Esophagus muscularis mucosa (tissue), 4 donors: ENCODE measurements at regions of chr7 and their contacts with region 1.

Region 1: DNA sequence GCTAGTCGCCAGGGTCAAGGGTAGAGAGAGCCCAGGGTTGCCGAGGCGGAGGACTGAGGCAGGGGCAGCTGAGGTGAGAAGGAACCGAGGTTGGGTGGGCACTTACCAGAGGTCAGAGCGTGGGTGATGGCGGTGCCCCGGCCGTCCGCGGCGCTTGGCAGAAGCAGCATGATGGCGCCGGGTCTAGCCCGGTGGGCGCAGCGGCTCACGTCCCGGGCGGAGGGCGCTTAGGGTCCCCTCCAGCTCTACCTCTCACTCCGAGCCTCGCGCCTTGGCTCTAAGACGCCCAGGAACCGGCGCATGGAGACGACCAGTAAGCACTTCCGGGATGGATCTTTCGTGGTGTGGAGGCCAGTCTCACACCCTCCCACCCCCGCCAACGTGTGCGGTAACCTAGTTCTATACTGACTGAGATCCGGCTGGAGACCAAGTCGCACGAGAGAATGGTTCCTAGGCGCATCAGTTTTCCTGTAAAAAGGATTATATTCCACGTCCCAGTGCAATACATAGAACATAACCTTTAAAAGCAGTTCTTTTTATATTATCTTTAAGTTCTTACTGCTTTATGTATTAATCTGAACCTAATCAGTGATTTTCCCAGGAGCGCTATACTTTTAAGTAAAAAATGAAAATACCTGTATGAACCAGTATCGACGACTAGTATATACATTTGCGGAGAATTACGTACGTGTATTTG is at the start of gene DNAJC2:
- DNase-seq: peak; percentile 95
- H3K4me3 ChIP-seq: peak within 1 kb of the TSS; percentile 83 to 99 (median 92)
- H3K27ac ChIP-seq: peak within 1 kb of the TSS; percentile 82 to 88 (median 84)
- H3K4me1 ChIP-seq: peaks cover 38 to 61% (median 51%) of the 10 kb centered on the region in 4 donors
- H3K27me3 ChIP-seq: no peaks in the 10 kb centered on the region
- CTCF ChIP-seq: peak in 1 of 3 experiments; percentile 18
- EP300 ChIP-seq: no peak
- POLR2A ChIP-seq: no peak
- total RNA-seq, gene DNAJC2: 10.1 to 15.9 (median 10.3) TPM

Region 2: GRCh38 chr7:103148994-103149807 is 195.4 kb before region 1 on chr7 and contains the start of gene NAPEPLD:
- intact Hi-C with region 1: loop called (anchors 10 kb)
- DNase-seq: peak; percentile 94
- H3K4me3 ChIP-seq: peak within 1 kb of the TSS; percentile 68 to 85 (median 82)
- H3K27ac ChIP-seq: peak within 1 kb of the TSS; percentile 92 to 96 (median 95)
- H3K4me1 ChIP-seq: peaks cover 13 to 31% (median 26%) of the 10 kb centered on the region in 4 donors
- H3K27me3 ChIP-seq: no peaks in the 10 kb centered on the region
- CTCF ChIP-seq: no peak
- EP300 ChIP-seq: no peak
- POLR2A ChIP-seq: no peak
- total RNA-seq, gene NAPEPLD: 4.7 to 8.7 (median 6.1) TPM

Region 3: DNA sequence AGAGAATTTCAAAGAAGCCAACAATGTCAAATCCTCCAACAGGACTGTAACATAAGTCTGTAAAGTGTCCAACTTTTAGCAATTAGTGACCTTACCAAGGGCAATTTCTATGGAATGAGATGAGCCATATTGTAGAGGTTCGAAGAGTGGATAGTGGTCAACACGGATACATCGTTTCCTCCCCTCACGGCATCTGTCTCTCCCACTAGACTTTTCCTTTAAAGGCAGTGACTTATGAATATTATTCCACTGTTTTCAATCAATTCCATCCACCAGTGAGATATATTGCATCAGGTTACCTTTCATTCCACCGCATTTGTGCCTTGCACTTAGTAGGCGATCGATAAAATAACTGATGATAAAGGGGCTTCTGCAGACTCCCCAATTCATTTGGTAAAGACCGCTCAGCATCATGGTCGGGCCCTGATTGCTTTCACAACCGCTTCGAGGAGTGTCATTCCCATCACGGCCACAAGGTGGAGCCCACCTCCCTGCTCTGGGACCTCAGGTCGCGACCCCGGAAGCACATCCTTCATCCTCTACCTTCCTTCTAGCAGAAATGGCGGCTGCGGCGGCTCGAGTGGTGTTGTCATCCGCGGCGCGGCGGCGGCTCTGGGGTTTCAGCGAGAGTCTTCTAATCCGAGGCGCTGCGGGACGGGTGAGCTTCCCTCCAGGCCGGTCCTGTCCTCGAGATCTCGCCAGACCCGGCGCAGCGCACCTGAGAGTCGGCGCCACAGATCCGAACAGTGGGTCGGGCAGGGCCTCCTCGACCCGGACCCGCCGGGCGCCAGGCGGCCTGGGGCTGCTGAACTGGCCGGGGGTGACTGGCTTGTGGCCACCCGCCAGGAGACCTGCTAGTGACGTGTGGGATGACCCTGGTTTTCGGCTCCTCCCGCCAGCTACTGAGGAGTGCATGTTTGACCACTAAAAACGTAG is 47.4 kb before region 1 on chr7 and contains the start of gene PMPCB:
- intact Hi-C with region 1: loop called (anchors 5 kb)
- DNase-seq: peak; percentile 99
- H3K4me3 ChIP-seq: peak within 1 kb of the TSS; percentile 63 to 94 (median 78)
- H3K27ac ChIP-seq: peak within 1 kb of the TSS; percentile 78 to 86 (median 82)
- H3K4me1 ChIP-seq: peaks cover 15 to 31% (median 28%) of the 10 kb centered on the region in 4 donors
- H3K27me3 ChIP-seq: no peaks in the 10 kb centered on the region
- CTCF ChIP-seq: peak; percentile 95 to 98 (median 96)
- EP300 ChIP-seq: no peak
- POLR2A ChIP-seq: no peak
- total RNA-seq, gene PMPCB: 48.9 to 59.6 (median 50.6) TPM

Region 4: GRCh38 chr7:103622274-103622673 is 277.7 kb after region 1 on chr7:
- intact Hi-C with region 1: no loop called
- DNase-seq: no peak
- H3K4me3 ChIP-seq: no peak overlapping the region
- H3K27ac ChIP-seq: no peak overlapping the region
- H3K4me1 ChIP-seq: no peaks in the 10 kb centered on the region
- H3K27me3 ChIP-seq: no peaks in the 10 kb centered on the region
- CTCF ChIP-seq: no peak
- EP300 ChIP-seq: no peak
- POLR2A ChIP-seq: no peak